ENCODE measurements at regions of chr20 and their contacts with region 1.

Region 1: DNA sequence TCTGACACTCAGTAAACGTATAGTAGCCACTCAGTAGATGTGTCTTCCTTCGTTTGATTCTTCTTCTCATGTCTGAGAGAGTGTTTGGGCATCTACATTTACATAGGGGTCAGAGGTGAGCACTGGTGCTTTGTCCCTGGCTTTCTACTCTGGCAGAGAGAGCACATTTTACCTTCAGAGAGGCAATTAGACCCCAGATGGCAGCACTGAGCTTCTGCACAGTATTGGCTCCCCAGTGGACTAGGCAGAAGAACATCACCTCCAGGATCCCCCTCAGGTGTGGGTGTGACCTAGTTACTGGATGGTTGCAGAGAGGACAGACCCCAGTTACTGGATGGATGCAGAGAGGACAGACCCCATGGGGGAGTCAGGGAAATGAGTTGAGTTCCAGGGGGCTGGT is 327.2 kb downstream of the DHX35 start:
- DNase-seq: no peak
- H3K4me3 ChIP-seq: no peak overlapping the region
- H3K27ac ChIP-seq: no peak overlapping the region
- H3K4me1 ChIP-seq: peaks cover 5 to 21% (median 8%) of the 10 kb centered on the region in 3 donors
- H3K27me3 ChIP-seq: no peaks in the 10 kb centered on the region
- CTCF ChIP-seq: peak in 3 of 6 experiments; percentile 9 to 46 (median 19)
- POLR2A ChIP-seq: no peak

Region 2: GRCh38 chr20:38875175-38875993 is 413.9 kb before region 1 on chr20:
- intact Hi-C with region 1: no loop called
- DNase-seq: no peak
- H3K4me3 ChIP-seq: peak overlapping the region in 1 of 4 donors; percentile 32
- H3K27ac ChIP-seq: peak overlapping the region in 3 of 4 donors; percentile 34 to 77 (median 72)
- H3K4me1 ChIP-seq: peaks cover 0 to 68% (median 17%) of the 10 kb centered on the region in 3 donors
- H3K27me3 ChIP-seq: peaks cover 0 to 76% (median 3%) of the 10 kb centered on the region in 4 donors
- CTCF ChIP-seq: no peak
- POLR2A ChIP-seq: peak in 1 of 4 donors; percentile 21

Region 3: DNA sequence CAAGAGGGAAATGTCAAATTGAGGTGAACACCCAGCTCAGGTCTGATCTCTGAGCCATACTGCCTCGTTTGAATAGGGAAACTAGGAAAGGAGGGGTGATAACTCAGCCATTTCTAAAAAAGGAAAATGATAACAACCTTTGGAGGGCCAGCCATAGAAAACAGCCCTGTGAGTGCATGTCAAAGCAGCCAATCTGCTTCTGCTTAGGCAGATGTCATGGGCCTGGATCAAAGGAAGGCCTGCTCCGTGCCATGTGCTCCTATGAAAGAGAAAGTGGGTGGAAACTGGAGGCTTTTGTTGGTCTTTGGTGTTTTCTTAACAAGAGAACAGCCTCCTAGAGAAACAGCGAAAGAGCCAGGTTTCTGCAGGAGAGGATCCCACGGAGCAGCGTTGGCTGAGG is 100.9 kb after region 1 on chr20:
- intact Hi-C with region 1: no loop called
- DNase-seq: no peak
- H3K4me3 ChIP-seq: no peak overlapping the region
- H3K27ac ChIP-seq: no peak overlapping the region
- H3K4me1 ChIP-seq: no peaks in the 10 kb centered on the region
- H3K27me3 ChIP-seq: no peaks in the 10 kb centered on the region
- CTCF ChIP-seq: no peak
- POLR2A ChIP-seq: no peak

Region 4: DNA sequence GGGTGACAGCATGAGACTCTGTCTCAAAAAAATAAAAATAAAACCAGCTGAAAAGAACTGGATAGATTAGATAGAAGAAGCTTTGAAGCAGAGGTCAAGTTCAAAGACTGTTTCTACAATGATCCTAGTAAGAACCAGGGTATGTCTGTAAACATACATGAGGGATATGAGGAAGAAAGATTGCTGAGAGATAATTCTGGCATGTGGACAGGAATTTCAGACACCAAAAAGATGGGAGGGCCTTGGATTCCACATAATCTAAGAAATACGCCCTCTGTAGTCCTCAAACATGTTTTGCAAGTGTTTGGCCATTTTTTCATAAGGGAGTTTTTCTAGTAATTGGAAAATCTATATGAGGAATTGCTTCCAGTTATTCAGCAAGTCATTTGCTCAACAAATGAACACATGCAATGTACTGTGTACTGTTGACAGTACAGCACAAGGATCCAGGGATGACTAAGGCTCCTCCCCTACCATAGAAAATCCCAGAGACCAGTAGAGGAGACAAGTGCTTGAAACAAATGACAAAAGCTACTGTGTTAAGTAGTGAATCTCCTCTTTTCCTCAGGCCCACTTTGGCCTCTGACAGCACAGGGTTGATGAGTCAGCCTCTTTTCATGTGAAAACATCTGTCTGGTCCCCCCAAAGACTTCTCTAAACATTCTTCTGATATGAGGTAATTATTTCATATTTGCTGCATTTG is 603.8 kb after region 1 on chr20:
- intact Hi-C with region 1: loop called (anchors 10 kb)
- DNase-seq: no peak
- H3K4me3 ChIP-seq: no peak overlapping the region
- H3K27ac ChIP-seq: no peak overlapping the region
- H3K4me1 ChIP-seq: no peaks in the 10 kb centered on the region
- H3K27me3 ChIP-seq: no peaks in the 10 kb centered on the region
- CTCF ChIP-seq: no peak
- POLR2A ChIP-seq: no peak